ENCODE measurements at regions of chr4 and their contacts with region 1.

Region 1: DNA sequence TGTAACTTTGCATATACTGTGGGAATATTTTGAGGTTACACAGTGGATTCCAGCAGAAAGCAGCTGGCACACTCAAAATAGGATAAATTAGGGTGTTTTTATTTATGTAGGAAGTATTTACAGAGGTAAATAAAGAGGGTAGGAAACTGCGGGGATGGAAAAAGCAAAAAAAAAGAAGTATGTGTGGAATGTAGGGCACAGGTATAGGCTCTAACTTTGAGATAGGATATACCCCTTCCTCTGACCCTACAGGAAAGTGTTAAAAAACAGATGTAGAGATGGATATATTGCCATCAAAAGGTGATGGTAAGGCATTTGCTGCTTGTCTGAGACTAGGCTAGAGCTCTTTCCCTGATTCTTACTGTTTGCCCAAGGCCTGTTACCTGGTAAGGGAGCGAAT is 173.1 kb upstream of the ANK2 start:
- H3K4me3 ChIP-seq: no peak overlapping the region
- H3K27ac ChIP-seq: no peak overlapping the region
- H3K4me1 ChIP-seq: no peaks in the 10 kb centered on the region
- CTCF ChIP-seq: no peak

Region 2: DNA sequence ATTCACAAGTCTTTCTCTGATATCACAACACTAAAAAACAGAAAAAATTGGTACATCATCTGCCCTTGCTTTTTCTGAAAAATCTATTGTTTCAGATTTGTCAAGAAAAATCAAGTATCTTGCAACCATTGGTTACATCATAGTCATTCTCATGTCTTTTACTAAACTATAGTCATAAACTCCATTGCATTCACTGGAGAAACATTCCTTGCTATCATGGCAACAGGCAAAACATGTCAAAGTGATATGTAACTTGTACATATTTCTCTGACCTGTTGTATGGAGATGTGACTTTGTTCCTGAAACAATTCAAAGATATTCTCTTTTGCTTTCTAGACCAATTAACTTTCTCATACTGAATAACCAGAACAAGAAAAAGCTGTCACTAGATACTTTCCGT is 51.2 kb after region 1 on chr4:
- CTCF ChIA-PET with region 1: no interaction called
- POLR2A ChIA-PET with region 1: interaction called, 12 read pairs
- H3K4me3 ChIP-seq: no peak overlapping the region
- H3K27ac ChIP-seq: no peak overlapping the region
- H3K4me1 ChIP-seq: no peaks in the 10 kb centered on the region
- CTCF ChIP-seq: no peak

Measured in HEK293 (cell line).